ENCODE measurements at regions of chr6 and their contacts with region 1.

Region 1: DNA sequence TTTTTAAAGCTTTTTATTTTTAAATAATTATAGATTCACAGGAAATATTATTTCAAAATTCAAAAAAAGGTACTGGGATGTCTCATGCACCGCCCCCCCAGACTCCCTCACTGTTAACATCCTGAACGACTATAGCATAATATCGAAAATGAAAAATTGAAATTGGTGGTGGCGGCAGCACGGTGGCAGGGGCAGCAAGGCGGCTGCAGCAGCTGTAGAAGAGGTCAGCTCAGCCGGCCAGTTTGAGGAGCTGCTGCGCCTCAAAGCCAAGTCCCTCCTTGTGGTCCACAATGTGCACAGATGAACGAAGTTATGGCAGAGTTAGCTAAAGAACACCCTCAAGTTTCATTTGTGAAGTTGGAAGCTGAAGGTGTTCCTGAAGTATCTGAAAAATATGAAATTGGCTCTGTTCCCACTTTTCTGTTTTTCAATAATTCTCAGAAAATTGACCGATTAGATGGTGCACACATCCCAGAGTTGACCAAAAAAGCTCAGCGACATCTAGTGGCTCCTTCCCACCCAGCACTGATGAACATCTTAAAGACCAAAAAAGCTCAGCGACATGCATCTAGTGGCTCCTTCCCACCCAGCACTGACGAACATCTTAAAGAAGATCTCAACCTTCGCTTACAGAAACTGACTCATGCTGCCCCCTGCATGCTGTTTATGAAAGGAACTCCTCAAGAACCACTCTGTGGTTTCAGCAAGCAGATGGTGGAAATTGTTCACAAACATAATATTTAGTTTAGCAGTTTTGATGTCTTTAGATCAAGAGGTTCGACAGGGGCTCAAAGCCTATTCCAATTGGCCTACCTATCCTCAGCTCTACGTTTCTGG is 100.8 kb downstream of the FAM217A start:
- DNase-seq: peak; percentile 90
- H3K4me3 ChIP-seq: no peak overlapping the region
- H3K27ac ChIP-seq: no peak overlapping the region
- H3K4me1 ChIP-seq: peaks cover 6% of the 10 kb centered on the region
- H3K27me3 ChIP-seq: no peaks in the 10 kb centered on the region
- CTCF ChIP-seq: peak; percentile 66 to 93
- POLR2A ChIP-seq: no peak

Region 2: DNA sequence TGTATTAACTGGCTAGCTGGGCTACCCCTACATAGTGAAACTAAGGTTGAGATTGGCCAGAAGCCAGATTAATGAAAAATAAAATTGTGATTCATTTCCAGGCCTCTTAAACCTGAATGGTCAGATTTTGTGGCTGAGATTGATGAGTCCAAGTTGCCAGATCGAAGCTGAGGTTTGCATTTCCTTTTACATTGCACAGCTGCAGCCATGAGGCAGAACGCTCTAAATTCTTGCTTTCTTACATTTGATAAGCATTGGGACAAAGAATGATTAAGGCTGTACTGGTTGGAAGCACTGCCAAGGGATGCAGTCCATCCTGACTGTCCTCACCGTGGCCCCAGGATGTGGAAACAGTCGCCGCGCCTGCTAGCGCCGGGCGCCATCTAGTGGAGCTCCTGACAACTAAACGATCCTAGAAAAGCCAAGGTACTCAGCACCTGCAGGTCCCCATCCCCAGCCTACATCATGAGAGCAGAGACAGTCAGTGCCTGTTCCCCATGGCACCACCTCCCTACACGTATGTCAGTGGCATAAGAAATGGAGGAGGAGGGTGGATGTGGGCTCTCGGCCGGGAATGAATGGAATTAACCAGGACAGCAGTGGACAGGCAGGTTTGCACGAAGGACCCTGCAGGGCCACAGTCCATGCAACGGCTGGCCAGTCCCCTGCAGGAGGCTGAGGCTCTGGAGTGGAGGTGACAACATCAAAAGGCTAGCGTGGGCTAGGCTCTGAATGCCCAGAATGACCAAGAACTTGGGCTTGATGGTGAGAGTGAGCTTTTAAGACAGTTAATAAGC is 245.6 kb before region 1 on chr6:
- CTCF ChIA-PET with region 1: interaction called, 11 read pairs
- POLR2A ChIA-PET with region 1: no interaction called
- dilution Hi-C with region 1: no loop called
- intact Hi-C with region 1: no loop called
- DNase-seq: peak; percentile 88
- H3K4me3 ChIP-seq: no peak overlapping the region
- H3K27ac ChIP-seq: no peak overlapping the region
- H3K4me1 ChIP-seq: peaks cover 40% of the 10 kb centered on the region
- H3K27me3 ChIP-seq: no peaks in the 10 kb centered on the region
- CTCF ChIP-seq: peak; percentile 79 to 84
- POLR2A ChIP-seq: peak; percentile 22

Region 3: DNA sequence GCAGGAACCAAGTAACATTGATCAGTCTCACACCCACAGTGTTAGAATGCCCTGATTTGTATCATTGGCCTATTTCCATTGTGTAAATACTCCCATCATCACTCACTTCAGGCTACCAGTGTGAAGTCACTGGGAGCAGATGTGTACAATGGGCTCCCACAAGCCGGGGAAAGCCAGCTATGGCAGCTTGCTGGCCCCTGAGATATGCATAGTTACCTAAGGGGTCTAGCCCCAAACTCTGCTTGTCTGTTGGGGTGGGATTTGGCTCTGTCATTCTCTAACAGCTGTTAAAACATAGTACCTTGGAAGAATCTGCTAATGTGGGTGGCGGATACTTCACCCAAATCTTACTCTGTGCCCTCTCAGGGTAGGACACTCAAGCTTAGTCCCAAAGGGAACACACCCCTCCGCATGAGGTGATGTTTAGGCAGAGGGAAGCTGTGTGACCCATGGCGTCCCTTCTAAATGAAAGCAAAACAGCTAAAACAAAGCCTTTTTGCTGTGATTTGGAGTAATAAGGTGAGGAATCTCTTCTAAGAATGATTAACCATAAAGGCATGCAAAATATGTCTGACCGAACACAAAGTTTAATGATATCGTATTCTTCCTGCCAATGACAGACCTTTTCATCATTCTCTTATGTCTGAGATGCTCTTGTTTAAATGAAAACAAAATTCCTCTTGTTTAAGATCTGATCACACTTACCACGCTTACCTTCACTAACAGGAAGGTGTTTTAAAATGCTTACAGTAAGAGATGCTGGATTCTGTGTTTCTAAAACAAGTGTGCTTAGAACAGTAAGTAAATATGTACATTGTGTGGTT is 180.7 kb before region 1 on chr6:
- CTCF ChIA-PET with region 1: interaction called, 19 read pairs
- POLR2A ChIA-PET with region 1: interaction called, 3 read pairs
- dilution Hi-C with region 1: no loop called
- intact Hi-C with region 1: loop called (anchors 1 kb)
- DNase-seq: peak; percentile 83
- H3K4me3 ChIP-seq: no peak overlapping the region
- H3K27ac ChIP-seq: peak overlapping the region; percentile 100
- H3K4me1 ChIP-seq: peaks cover 39% of the 10 kb centered on the region
- H3K27me3 ChIP-seq: no peaks in the 10 kb centered on the region
- CTCF ChIP-seq: no peak
- POLR2A ChIP-seq: peak; percentile 58

Region 4: DNA sequence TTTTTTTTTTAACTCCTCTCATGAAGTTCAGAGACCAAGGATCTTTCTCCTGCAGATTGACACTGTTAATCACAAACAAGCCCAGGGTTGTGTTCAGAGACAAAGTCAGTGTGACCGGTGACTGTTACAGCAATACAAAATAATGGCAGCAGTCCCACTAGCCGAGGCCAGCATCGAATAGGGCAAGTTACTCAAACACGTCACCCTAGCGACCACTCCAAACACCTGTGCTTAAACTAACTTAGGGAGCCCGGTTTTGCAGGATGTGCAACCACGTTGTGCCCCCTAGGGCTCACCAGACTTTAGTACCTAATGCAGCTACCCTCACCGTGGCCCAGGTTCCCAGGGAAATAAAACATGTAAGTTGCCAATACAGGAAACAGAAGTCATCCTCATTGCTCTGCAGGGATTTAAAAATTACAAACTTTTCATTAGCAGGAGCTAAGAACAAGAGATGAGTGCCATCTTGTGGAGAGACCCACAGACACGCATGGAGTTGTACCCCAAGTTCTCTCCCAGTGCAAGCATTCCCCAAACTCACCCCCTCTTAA is 90.9 kb before region 1 on chr6:
- CTCF ChIA-PET with region 1: interaction called, 48 read pairs
- POLR2A ChIA-PET with region 1: no interaction called
- dilution Hi-C with region 1: no loop called
- intact Hi-C with region 1: loop called (anchors 1 kb)
- DNase-seq: peak; percentile 67
- H3K4me3 ChIP-seq: no peak overlapping the region
- H3K27ac ChIP-seq: no peak overlapping the region
- H3K4me1 ChIP-seq: peaks cover 19% of the 10 kb centered on the region
- H3K27me3 ChIP-seq: no peaks in the 10 kb centered on the region
- CTCF ChIP-seq: peak; percentile 45 to 62
- POLR2A ChIP-seq: no peak

Region 5: DNA sequence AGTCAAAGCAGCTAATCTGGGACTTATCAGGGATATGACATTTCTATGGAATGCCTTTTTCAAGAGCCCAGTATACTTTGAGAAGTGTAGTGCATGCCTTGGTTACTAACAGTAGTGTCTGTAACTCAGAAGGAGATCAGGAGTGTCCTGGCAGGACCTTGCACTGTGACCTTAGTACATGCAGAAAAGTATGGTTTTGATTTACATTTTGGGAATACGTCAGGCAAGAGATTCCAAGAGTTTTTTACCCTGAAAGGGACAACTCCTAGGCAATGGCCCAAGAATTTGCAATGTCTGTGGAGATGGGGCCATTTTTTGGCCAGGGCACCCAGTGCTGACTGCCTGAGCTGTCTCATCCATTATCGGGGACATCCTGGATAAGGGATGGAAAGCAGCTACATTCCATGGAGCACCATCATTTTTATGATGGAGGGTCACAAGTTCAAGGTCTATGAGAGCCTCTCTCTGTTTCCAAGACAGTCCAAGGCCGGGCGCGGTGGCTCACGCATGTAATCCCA is 48.8 kb before region 1 on chr6:
- CTCF ChIA-PET with region 1: interaction called, 33 read pairs
- POLR2A ChIA-PET with region 1: no interaction called
- dilution Hi-C with region 1: no loop called
- intact Hi-C with region 1: loop called (anchors 1 kb)
- DNase-seq: no peak
- H3K4me3 ChIP-seq: no peak overlapping the region
- H3K27ac ChIP-seq: no peak overlapping the region
- H3K4me1 ChIP-seq: no peaks in the 10 kb centered on the region
- H3K27me3 ChIP-seq: no peaks in the 10 kb centered on the region
- CTCF ChIP-seq: no peak
- POLR2A ChIP-seq: no peak

Region 6: GRCh38 chr6:3990692-3991501 is 12.8 kb after region 1 on chr6:
- CTCF ChIA-PET with region 1: interaction called, 93 read pairs
- POLR2A ChIA-PET with region 1: no interaction called
- dilution Hi-C with region 1: no loop called
- intact Hi-C with region 1: no loop called
- DNase-seq: peak; percentile 91
- H3K4me3 ChIP-seq: no peak overlapping the region
- H3K27ac ChIP-seq: no peak overlapping the region
- H3K4me1 ChIP-seq: peaks cover 17% of the 10 kb centered on the region
- H3K27me3 ChIP-seq: no peaks in the 10 kb centered on the region
- CTCF ChIP-seq: peak; percentile 92 to 94
- POLR2A ChIP-seq: no peak